ENCODE measurements at regions of chr9 and their contacts with region 1.

Region 1: DNA sequence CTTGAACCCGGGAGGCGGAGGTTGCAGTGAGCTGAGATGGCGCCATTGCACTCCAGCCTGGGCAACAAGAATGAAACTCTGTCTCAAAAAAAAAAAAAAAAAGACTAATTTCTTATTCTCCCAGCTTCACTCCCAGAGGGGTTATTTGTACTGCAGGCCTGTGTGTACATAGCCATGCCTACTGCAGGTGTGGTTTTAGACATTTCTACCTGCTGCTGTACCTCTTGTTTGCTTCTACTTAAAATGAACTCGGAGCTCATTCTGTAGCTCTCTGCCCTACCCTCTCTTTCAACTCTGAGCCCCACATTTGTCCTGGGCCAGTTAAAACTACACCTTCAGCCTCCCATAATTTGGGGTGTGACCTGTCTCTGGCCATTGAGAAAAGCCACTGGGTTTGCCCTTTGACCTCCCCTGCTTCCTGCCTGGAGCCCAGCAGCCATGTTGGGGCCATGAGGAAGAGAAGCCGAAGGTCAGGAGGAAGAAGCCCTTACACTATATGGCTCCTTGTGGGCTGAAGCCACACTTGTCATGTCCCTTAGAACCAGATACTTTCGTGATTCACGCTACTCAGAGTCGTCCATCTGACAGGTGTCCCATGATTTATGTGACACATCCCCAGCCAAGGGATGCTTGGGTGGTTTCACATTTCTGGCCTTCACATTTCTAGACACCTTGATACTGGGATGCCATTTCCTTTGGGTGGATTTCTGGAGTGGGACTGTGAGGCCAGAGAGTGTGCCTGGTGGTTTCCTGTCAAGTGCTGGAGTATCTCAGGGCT is 9.4 kb upstream of the CARD19 start:
- DNase-seq: no peak
- H3K4me3 ChIP-seq: no peak overlapping the region
- H3K4me3 Mint-ChIP-seq: no peak overlapping the region
- H3K27ac ChIP-seq: no peak overlapping the region
- H3K27ac Mint-ChIP-seq: peak overlapping the region in 2 of 7 donors; percentile 10 to 64
- H3K4me1 ChIP-seq: peaks cover 17 to 29% of the 10 kb centered on the region in 2 donors
- H3K4me1 Mint-ChIP-seq: peaks cover 27% of the 10 kb centered on the region
- H3K27me3 ChIP-seq: no peaks in the 10 kb centered on the region
- H3K27me3 Mint-ChIP-seq: peaks cover 0 to 6% (median 2%) of the 10 kb centered on the region in 3 donors
- CTCF ChIP-seq: no peak

Region 2: GRCh38 chr9:92983984-92984589 is 102.5 kb before region 1 on chr9:
- intact Hi-C with region 1: no loop called
- DNase-seq: no peak
- H3K4me3 ChIP-seq: no peak overlapping the region
- H3K4me3 Mint-ChIP-seq: no peak overlapping the region
- H3K27ac ChIP-seq: peak overlapping the region in 1 of 2 donors; percentile 49
- H3K27ac Mint-ChIP-seq: peak overlapping the region in 1 of 7 donors; percentile 7
- H3K4me1 ChIP-seq: peaks cover 9 to 16% of the 10 kb centered on the region in 2 donors
- H3K4me1 Mint-ChIP-seq: peaks cover 52% of the 10 kb centered on the region
- H3K27me3 ChIP-seq: no peaks in the 10 kb centered on the region
- H3K27me3 Mint-ChIP-seq: no peaks in the 10 kb centered on the region
- CTCF ChIP-seq: no peak

Region 3: DNA sequence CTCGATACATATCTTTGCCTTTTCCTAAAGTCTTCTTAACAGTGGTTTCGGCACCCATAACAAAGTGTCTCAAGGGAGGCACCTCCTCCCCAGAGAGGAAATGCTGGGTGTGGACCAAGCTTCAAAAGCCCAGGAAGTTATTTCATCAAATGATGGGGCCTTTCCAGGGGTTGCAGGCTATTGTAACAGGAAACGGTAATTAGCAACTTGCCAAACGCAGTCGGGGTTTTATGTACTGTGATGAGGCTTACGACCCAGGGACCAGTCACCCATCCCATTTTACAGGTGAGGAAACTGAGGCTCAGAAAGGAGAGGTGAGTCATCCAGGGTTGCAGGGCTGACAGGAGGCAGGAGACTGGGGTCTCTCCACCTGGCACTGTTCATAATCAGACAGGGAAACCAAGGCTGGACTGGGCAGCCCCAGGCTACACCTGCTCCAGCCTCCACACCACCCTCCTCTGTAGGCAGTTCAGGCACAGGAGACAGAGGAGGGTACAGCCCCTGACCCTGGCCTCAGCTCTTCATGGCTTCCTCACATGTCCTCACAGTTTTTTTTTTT is 58.1 kb before region 1 on chr9:
- intact Hi-C with region 1: loop called in 1 of 2 experiments (anchors 5 kb)
- DNase-seq: peak; percentile 74 to 88 (median 83)
- H3K4me3 ChIP-seq: peak overlapping the region in 1 of 3 experiments; percentile 61
- H3K4me3 Mint-ChIP-seq: peak overlapping the region; percentile 59 to 61
- H3K27ac ChIP-seq: peak overlapping the region; percentile 81 to 86
- H3K27ac Mint-ChIP-seq: peak overlapping the region; percentile 84 to 97 (median 95)
- H3K4me1 ChIP-seq: peaks cover 97 to 100% of the 10 kb centered on the region in 2 donors
- H3K4me1 Mint-ChIP-seq: peaks cover 95% of the 10 kb centered on the region
- H3K27me3 ChIP-seq: no peaks in the 10 kb centered on the region
- H3K27me3 Mint-ChIP-seq: no peaks in the 10 kb centered on the region
- CTCF ChIP-seq: no peak

Region 4: DNA sequence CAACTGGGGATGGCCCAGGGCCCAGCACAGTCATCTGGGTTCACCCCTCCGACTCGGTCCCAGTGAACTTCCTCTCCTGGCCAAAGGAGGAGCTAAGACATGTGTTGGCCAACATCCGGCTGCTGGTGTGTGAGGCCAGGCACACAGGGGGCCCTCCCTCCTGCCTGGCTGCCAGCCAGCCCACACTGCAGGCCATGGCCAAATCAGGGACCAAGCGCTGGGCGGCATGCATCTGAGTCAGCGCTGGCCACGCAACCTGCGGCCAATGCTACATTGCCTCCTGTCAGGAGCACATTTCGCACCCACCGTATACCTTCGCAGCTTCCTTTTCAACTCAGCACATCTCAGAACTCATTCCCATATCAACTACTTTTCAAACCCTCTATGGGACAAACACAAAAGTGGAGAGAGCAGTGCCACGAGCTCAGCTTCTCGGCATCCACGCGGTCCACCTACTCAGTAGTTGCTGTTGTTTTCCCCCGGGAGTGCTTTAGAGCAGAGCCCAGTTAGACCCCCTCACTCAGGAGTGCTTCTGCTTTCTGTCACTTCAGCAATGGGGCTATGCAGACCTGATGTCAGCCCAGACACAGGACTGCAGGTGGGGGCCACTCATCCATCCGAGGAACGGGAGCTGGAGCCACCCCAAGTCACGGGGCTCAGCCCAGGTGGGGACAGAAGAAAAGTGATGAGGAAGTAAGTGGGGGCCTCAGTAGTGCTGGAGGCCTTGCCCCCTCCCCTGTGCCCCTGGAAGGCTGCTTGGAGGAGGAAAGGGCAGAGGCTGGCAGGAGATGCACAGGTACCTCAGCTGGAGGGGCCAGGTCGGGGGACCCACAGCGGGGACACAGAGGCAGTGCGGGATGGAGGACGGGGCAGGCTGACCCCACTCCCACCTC is 33.6 kb after region 1 on chr9:
- intact Hi-C with region 1: no loop called
- DNase-seq: peak; percentile 99
- H3K4me3 ChIP-seq: peak overlapping the region in 1 of 3 experiments; percentile 49
- H3K4me3 Mint-ChIP-seq: peak overlapping the region; percentile 52 to 81
- H3K27ac ChIP-seq: peak overlapping the region; percentile 90 to 99
- H3K27ac Mint-ChIP-seq: peak overlapping the region; percentile 99 to 100 (median 100)
- H3K4me1 ChIP-seq: peaks cover 68 to 83% of the 10 kb centered on the region in 2 donors
- H3K4me1 Mint-ChIP-seq: peaks cover 65% of the 10 kb centered on the region
- H3K27me3 ChIP-seq: no peaks in the 10 kb centered on the region
- H3K27me3 Mint-ChIP-seq: peaks cover 0 to 2% (median 0%) of the 10 kb centered on the region in 3 donors
- CTCF ChIP-seq: peak; percentile 24

Region 5: DNA sequence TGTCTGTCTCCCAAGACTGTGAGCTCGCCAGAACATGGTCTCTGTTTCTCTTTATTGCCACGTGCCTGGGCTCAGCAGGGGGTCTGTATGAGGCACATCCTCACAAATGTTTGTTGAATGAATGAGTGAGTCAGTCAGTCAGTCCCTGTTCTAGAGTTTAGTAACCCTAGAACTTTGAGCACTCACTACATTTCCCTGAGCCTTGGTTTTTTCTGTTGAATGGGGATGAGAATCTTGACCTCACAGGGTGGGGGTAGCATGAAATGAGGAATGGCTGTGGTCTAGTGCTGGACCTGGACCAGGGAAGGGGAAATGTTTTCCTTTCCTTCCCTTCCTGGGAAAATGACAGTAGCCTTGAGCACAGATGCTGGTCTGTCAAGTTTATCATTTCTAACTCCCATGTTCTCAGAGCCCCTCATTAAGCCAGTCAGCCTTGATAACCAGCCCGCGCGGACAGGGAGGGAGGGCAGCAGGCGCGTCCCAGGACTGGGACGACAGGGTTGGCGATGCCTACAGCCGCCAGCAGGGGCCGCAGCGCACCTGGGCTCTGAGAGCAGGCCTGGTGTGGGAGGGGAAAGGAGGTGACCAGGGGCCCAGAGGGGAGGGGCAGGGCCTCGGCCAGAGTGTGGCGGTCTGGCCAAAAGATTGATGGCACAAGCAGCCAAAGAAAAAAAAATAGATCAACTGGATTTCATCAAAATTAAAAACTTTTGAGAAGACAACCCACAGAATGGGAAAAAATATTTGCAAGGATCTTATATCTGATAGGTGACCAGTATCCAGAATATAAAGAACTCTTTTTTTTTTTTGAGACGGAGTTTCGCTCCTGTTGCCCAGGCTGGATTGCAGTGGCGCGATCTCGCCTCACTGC is 73.2 kb after region 1 on chr9:
- intact Hi-C with region 1: no loop called
- DNase-seq: peak; percentile 70 to 82 (median 75)
- H3K4me3 ChIP-seq: no peak overlapping the region
- H3K4me3 Mint-ChIP-seq: no peak overlapping the region
- H3K27ac ChIP-seq: no peak overlapping the region
- H3K27ac Mint-ChIP-seq: peak overlapping the region in 2 of 7 donors; percentile 58 to 65
- H3K4me1 ChIP-seq: peaks cover 6 to 10% of the 10 kb centered on the region in 2 donors
- H3K4me1 Mint-ChIP-seq: peaks cover 10% of the 10 kb centered on the region
- H3K27me3 ChIP-seq: no peaks in the 10 kb centered on the region
- H3K27me3 Mint-ChIP-seq: peaks cover 3 to 13% (median 8%) of the 10 kb centered on the region in 3 donors
- CTCF ChIP-seq: peak; percentile 97

Region 6: GRCh38 chr9:93268551-93269314 is 182.1 kb after region 1 on chr9:
- intact Hi-C with region 1: no loop called
- DNase-seq: peak in 1 of 3 donors; percentile 0
- H3K4me3 ChIP-seq: no peak overlapping the region
- H3K4me3 Mint-ChIP-seq: peak overlapping the region in 1 of 2 donors; percentile 45
- H3K27ac ChIP-seq: no peak overlapping the region
- H3K27ac Mint-ChIP-seq: no peak overlapping the region
- H3K4me1 ChIP-seq: no peaks in the 10 kb centered on the region
- H3K4me1 Mint-ChIP-seq: peaks cover 2% of the 10 kb centered on the region
- H3K27me3 ChIP-seq: peaks cover 2 to 3% of the 10 kb centered on the region in 2 donors
- H3K27me3 Mint-ChIP-seq: peaks cover 14 to 36% (median 21%) of the 10 kb centered on the region in 3 donors
- CTCF ChIP-seq: no peak